Heart right ventricle (tissue), 16 donors: ENCODE measurements at regions of chr4 and their contacts with region 1.

Region 1: DNA sequence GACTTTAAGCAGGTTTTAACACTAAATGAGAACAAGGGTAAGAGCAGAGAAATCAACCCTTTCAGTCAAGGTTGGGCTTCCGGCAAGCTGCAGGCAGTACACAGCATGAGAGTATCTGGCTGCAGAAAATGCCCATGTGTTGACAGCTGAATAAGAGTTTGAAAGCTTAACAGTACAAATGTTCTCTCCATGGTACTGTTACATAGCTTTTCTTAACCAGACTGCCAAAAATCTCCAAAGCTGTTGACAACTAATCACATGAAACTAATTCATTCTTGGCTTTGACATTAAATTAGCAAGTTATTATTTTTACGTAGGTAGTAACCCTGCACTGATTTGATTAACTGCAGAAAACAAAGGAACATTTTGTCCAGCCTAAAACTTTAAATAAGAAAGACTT is 153.5 kb downstream of the SLC10A7 start:
- DNase-seq: peak in 1 of 2 donors; percentile 12
- ATAC-seq: peak; percentile 46 to 98 (median 80)
- H3K4me3 ChIP-seq: no peak overlapping the region
- H3K27ac ChIP-seq: no peak overlapping the region
- H3K4me1 ChIP-seq: peaks cover 0 to 33% (median 28%) of the 10 kb centered on the region in 9 donors
- H3K27me3 ChIP-seq: no peaks in the 10 kb centered on the region
- CTCF ChIP-seq: no peak

Region 2: DNA sequence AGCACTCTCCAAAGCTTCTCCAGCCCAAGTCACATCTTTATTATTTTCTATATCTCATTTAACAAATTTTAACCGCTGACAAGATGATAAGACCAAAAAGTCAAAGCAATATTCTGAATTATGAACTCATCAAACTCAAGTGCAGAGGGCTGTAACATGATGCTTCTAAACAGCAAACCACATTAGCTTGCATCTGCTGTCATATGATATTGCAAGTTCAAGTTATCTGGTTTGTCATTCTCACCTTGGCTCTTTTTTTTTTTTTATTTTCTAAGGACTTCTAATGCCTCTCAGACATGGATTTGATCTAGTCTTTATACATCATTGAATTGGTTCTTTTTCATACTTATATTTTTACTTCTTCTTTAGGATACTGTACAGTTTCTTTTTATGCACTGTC is 60.1 kb after region 1 on chr4:
- intact Hi-C with region 1: no loop called
- DNase-seq: no peak
- ATAC-seq: no peak
- H3K4me3 ChIP-seq: no peak overlapping the region
- H3K27ac ChIP-seq: no peak overlapping the region
- H3K4me1 ChIP-seq: no peaks in the 10 kb centered on the region
- H3K27me3 ChIP-seq: no peaks in the 10 kb centered on the region
- CTCF ChIP-seq: no peak

Region 3: DNA sequence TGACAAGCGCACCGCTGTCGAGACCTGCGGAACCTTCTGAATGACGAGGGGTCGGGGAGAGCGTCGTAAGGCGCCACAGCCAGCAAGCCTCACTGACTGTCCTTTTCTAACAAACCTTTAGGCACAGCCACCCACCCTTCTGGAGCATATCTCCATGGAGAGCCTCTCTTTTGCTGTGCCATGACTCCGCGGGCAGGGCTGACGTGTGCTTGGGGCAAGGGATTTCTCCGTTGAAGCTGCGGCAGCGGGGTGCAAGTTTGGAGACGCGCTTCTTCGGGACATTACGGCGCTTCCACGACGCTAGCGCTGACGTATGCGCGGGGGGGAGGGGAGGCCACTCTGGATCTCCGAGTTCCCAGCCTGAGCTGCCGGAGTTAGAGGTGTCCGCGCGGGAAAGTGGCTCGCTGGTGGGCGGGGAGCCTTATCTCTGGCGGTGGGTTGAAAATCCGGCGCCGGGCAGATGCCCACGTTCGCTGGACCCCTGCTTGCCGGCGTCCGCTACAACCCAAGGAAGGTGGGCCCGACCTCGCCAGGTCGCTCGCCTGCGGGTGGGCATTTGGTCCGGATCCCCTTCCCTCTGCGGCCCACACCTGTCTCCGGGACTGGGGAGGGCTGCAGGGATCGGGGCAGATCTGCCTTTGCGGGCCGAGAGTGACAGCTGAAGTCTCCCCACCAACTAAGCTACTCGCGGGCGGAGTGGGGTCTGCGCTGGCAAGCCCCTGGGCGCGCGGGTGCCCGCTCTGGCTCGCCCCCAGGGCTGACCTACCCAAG is 154.1 kb after region 1 on chr4:
- intact Hi-C with region 1: loop called in 2 of 10 experiments (anchors 10 kb)
- DNase-seq: peak; percentile 89 to 94
- ATAC-seq: peak; percentile 98 to 99 (median 99)
- H3K4me3 ChIP-seq: peak overlapping the region; percentile 55 to 100 (median 76)
- H3K27ac ChIP-seq: peak overlapping the region; percentile 27 to 96 (median 84)
- H3K4me1 ChIP-seq: peaks cover 0 to 27% (median 21%) of the 10 kb centered on the region in 9 donors
- H3K27me3 ChIP-seq: no peaks in the 10 kb centered on the region
- CTCF ChIP-seq: no peak